GM12878 (cell line): ENCODE measurements at regions of chr1 and their contacts with region 1.

Region 1: GRCh38 chr1:154791292-154792166 is 78.6 kb downstream of the KCNN3 start:
- DNase-seq: peak; percentile 88
- ATAC-seq: peak; percentile 97
- H3K4me3 ChIP-seq: peak overlapping the region; percentile 49; the same call in 1 of the 2 replicates
- H3K27ac ChIP-seq: peak overlapping the region; percentile 59
- H3K4me1 ChIP-seq: peaks cover 39% of the 10 kb centered on the region
- H3K27me3 ChIP-seq: no peaks in the 10 kb centered on the region
- CTCF ChIP-seq: peak; percentile 39 to 41 (median 40)
- EP300 ChIP-seq: peak; percentile 76 to 77
- POLR2A ChIP-seq: no peak
- RAD21 ChIP-seq: peak; percentile 48

Region 2: DNA sequence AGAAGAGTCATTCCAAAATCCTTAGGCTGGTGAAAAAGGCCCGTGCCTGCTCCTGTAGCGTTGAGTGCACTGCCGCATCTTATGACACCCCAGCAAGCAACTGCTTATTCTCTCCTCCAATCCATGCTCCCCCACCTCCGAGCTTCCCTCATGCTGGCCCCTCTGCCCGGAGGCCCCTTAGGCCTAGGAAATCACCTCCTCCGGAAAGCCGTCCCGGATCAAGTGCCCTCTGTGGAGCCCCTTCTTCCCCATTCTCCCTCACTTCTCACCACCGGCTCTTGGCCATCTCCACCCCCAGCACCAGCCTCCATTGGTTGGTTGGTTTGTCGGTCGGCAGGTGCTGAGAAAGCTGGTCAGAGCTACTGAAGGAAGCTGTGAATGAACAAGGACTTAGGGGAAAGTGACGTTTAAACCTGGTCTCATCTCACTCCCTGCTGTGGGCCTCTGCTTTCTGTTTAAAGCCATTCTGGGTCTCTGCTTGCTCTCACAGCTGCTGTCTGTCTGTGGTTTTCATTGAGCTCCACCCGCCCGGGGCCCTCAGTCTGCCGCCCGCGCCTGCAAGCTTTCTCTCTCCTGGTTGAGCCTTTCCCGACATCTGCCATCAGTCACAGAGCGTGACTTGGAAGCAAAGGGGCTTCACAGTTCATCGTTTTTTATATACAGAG is 43.7 kb before region 1 on chr1:
- CTCF ChIA-PET with region 1: interaction called, 14 read pairs
- POLR2A ChIA-PET with region 1: interaction called, 5 read pairs
- RAD21 ChIA-PET with region 1: interaction called, 5 read pairs
- SMC1A ChIA-PET with region 1: interaction called, 11 read pairs
- in situ Hi-C with region 1: no loop called
- intact Hi-C with region 1: no loop called
- DNase-seq: peak; percentile 66
- ATAC-seq: peak; percentile 89
- H3K4me3 ChIP-seq: peak overlapping the region; percentile 34; the same call in 1 of the 2 replicates
- H3K27ac ChIP-seq: peak overlapping the region; percentile 67
- H3K4me1 ChIP-seq: peaks cover 48% of the 10 kb centered on the region
- H3K27me3 ChIP-seq: no peaks in the 10 kb centered on the region
- CTCF ChIP-seq: no peak
- EP300 ChIP-seq: no peak
- POLR2A ChIP-seq: no peak
- RAD21 ChIP-seq: no peak

Region 3: DNA sequence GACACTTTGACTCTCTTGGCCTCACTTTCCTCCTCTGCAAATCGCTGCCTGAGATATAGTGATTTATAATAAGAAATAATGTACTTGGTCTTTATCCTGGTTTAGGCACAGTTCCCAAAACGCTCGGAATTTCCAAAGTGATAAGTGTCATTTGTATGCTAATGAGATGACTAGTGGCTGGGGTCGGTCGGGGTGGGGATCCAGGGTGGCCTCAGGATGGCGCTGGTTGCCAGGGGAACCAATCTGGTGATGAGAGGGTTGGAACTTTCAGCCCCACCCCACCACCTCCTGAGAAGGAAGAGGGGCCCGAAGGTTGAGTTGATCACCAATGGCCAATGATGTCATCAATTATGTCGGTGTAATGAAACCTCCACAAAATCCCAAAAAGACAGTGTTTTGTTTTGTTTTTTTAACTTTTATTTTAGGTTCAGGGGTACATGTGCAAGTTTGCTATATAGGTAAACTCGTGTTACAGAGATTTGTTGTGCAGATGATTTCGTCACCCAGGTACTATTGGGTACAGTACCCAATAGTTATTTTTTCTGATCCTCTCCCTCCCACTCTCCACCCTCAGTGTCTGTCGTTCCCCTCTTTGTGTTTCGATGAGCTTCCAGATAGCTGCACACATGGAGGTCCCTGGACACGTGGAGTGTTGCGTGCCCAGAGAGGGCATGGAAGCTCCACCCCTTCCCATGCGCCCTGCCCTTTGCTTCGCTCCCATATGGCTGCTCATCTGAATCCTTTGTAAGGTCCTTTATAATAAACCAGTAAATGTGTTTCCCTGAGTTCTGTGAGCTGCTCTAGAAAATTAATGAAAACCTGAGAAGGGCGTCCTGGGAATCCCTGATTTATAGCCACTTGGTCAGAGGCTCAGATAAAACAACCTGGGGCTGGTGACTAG is 18.7 kb before region 1 on chr1:
- CTCF ChIA-PET with region 1: interaction called, 10 read pairs
- POLR2A ChIA-PET with region 1: interaction called, 5 read pairs
- RAD21 ChIA-PET with region 1: interaction called, 17 read pairs
- SMC1A ChIA-PET with region 1: interaction called, 4 read pairs
- in situ Hi-C with region 1: no loop called
- intact Hi-C with region 1: no loop called
- DNase-seq: no peak
- ATAC-seq: peak; percentile 34; the same call in 1 of the 3 replicates
- H3K4me3 ChIP-seq: no peak overlapping the region
- H3K27ac ChIP-seq: peak overlapping the region; percentile 15; the same call in 1 of the 2 replicates
- H3K4me1 ChIP-seq: peaks cover 24% of the 10 kb centered on the region
- H3K27me3 ChIP-seq: no peaks in the 10 kb centered on the region
- CTCF ChIP-seq: peak in 2 of 3 experiments; percentile 10 to 24; a peak in 2 of 6 replicates
- EP300 ChIP-seq: no peak
- POLR2A ChIP-seq: no peak
- RAD21 ChIP-seq: no peak

Region 4: DNA sequence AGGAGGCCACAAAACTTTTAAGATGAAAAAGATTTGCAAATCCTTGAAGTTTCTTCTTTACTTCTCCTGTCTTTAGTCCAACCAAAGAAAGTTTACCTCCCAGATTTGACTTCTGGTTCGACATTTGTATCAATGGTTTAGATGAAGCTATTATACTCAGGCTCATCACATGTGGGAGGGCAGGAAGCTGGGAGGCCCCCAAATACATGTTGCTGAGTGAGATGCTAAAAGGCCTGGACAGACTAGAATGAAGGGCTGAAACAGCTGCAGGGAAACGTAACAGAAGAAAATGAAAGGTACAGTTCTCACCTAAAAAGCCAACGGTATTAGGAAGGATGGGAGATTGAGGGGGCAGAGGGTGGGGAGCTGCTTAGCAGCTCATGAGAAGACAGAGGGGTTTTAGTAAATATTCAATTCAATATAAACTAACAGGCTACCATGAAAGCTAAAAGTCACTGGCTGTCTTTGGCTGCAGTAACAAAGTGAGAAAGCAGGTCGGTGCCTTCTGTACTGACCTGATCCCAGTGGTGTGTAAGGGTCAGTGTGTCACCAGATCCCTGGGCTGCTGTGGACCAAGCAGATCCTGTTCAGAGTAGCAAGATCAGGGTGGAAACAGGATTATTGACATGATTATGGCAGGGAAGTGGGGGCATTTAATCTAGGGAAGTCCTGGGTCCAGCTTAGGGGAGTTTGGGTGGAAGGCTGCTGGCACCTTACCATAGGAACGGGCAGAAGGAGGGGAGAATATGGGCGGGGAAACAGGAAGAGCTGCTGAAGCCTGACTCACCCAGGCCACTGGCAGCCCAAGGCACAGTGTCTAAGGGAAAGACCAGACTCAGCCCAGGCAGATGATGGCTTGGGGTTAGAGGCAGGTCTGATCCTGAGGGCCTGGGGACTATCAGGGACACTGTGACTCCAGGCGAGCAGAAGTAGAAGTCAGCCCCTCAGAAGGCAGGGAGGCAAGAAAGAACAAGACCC is 18.2 kb after region 1 on chr1:
- CTCF ChIA-PET with region 1: interaction called, 17 read pairs
- POLR2A ChIA-PET with region 1: interaction called, 12 read pairs
- RAD21 ChIA-PET with region 1: interaction called, 46 read pairs
- SMC1A ChIA-PET with region 1: interaction called, 75 read pairs
- in situ Hi-C with region 1: no loop called
- intact Hi-C with region 1: no loop called
- DNase-seq: no peak
- ATAC-seq: peak; percentile 21
- H3K4me3 ChIP-seq: no peak overlapping the region
- H3K27ac ChIP-seq: peak overlapping the region; percentile 51
- H3K4me1 ChIP-seq: peaks cover 49% of the 10 kb centered on the region
- H3K27me3 ChIP-seq: no peaks in the 10 kb centered on the region
- CTCF ChIP-seq: no peak
- EP300 ChIP-seq: no peak
- POLR2A ChIP-seq: no peak
- RAD21 ChIP-seq: no peak

Region 5: DNA sequence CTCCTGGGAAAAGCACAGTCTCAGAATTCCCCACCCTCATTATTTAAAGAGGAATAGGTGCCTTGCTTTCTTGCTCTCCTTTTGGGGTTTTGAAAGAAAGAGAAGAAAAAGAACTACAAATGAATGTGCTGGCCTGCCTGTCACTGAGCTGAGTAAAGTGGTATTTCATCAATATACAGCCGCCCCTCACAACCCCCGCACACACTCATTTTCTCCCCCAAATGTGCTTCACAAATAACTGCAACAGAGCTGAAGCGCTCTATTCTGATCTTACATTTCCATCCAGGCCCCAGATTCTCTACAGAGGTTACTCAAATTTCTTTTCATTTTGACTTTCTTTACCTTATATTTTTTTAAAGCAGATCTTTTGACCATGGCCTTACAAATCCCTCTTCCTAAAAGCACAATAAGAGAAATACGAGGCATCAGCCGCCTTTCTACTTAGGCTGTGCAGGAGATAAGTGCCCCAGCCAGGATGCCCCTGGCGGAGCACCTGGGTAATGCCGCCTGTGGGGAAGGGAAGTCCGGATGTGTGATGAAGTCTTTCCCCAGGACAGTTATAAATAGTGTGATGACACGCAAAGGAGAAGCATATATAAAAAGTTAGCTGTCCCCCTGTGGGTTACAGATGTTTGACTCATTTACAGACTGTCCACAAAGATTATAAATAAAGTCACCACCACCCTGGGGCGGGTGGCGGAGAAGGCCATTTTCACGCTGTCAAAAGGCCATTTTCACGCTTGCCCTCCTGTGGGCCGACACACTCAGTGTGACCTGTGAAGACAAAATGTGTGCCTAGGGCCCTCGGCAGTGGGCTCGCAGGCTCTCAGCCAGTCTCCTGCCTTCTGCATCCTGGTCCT is 72.0 kb after region 1 on chr1:
- CTCF ChIA-PET with region 1: interaction called, 10 read pairs
- POLR2A ChIA-PET with region 1: interaction called, 12 read pairs
- RAD21 ChIA-PET with region 1: interaction called, 40 read pairs
- SMC1A ChIA-PET with region 1: interaction called, 26 read pairs
- in situ Hi-C with region 1: no loop called
- intact Hi-C with region 1: loop called (anchors 2 kb)
- DNase-seq: peak; percentile 85
- ATAC-seq: peak; percentile 39
- H3K4me3 ChIP-seq: peak overlapping the region; percentile 49; the same call in 1 of the 2 replicates
- H3K27ac ChIP-seq: peak overlapping the region; percentile 79
- H3K4me1 ChIP-seq: peaks cover 88% of the 10 kb centered on the region
- H3K27me3 ChIP-seq: no peaks in the 10 kb centered on the region
- CTCF ChIP-seq: peak; percentile 77 to 95 (median 88)
- EP300 ChIP-seq: peak; percentile 61 to 89; a peak in 2 of 4 replicates
- POLR2A ChIP-seq: peak; percentile 39; the same call in 1 of the 2 replicates
- RAD21 ChIP-seq: peak; percentile 70